ENCODE measurements at regions of chr6 and their contacts with region 1.

Region 1: GRCh38 chr6:10098756-10099528 is 315.9 kb downstream of the TFAP2A start:
- DNase-seq: no peak
- H3K4me3 ChIP-seq: no peak overlapping the region
- CTCF ChIP-seq: no peak
- POLR2A ChIP-seq: no peak

Region 2: GRCh38 chr6:10404107-10404798 is 305.3 kb after region 1 on chr6:
- intact Hi-C with region 1: loop called (anchors 10 kb)
- DNase-seq: peak; percentile 90 to 96
- H3K4me3 ChIP-seq: peak overlapping the region; percentile 15
- CTCF ChIP-seq: no peak
- POLR2A ChIP-seq: no peak

Region 3: GRCh38 chr6:10713962-10714361 is 615.0 kb after region 1 on chr6:
- intact Hi-C with region 1: no loop called
- DNase-seq: no peak
- H3K4me3 ChIP-seq: no peak overlapping the region
- CTCF ChIP-seq: no peak
- POLR2A ChIP-seq: no peak